ENCODE measurements at regions of chr7 and their contacts with region 1.

Region 1: DNA sequence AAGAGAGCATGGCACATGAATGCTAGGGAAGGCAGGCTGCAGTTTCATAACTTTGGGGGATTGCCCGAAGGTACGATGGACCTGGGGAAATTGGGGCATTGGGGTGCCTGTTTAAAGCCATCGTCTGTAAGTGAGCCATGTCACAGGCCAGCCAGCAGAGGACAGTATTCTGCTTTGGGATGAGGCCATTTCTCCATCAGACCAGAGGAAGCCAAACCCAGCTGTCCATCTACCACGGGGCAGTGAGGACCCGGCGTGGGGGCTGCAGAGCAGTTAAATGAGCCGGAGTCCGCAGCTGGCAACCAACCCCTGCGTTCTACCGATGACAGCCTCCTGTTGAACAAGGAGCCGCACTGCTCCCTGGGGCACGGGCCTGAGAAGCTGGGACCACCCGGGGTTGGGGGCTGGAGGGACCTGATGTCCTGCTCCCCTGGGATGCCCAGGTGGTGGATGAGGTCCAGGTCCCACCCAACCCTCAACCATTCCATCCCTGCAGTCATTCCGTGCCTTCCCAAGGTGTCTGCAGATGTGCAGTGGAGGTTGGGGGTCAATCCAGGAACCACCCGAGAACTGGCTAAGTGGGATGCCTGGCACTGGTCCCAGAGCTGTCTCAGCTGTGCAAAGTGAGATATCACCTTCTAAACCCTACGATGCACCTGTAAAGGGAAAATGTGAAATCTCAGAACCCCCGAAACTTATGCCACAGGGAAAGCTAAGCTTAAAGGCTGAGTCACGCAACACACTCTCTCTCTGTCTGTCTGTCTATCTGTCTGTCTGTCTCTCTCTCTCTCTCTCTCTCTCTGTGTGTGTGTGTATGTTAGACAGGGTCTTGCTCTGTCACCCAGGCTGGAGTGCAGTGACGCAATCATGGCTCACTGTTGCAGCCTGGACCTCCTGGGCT is 12.1 kb upstream of the RHBDD2 start:
- DNase-seq: peak; percentile 74 to 89 (median 82)
- H3K4me3 ChIP-seq: no peak overlapping the region
- H3K27ac ChIP-seq: no peak overlapping the region
- H3K4me1 ChIP-seq: peaks cover 0 to 7% (median 0%) of the 10 kb centered on the region in 3 donors
- H3K27me3 ChIP-seq: no peaks in the 10 kb centered on the region
- CTCF ChIP-seq: peak; percentile 99

Region 2: DNA sequence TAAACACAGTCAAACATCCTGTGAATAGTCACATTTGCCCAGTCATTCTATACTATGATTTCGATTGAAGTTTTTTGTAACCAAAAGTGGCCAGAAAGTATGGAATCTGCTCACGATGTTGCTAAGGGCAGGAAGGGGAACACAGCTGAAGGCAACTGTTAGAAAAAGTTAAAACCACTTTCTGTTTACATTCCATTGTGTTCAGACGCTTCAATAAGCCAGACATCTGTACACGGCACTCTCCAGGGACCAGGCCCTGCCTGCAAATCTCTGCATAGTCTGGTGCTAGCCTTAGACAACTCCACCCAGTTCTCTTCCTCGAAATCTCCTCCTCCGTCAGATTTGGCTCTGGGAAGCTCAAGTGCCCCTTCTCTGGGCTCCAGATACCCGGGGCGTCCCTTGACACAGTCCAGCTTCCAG is 144.7 kb after region 1 on chr7:
- intact Hi-C with region 1: loop called (anchors 10 kb)
- DNase-seq: peak in 1 of 5 donors; percentile 44
- H3K4me3 ChIP-seq: no peak overlapping the region
- H3K27ac ChIP-seq: peak overlapping the region; percentile 20 to 47
- H3K4me1 ChIP-seq: no peaks in the 10 kb centered on the region
- H3K27me3 ChIP-seq: no peaks in the 10 kb centered on the region
- CTCF ChIP-seq: no peak